ENCODE measurements at regions of chr3 and their contacts with region 1.

Region 1: GRCh38 chr3:126982471-126983175 is at the start of gene PLXNA1:
- DNase-seq: peak; percentile 78 to 94 (median 90)
- ATAC-seq: peak; percentile 91
- H3K4me3 ChIP-seq: peak within 1 kb of the TSS; percentile 57
- H3K4me3 Mint-ChIP-seq: peak within 1 kb of the TSS; percentile 83 to 92 (median 88)
- H3K27ac ChIP-seq: peak within 1 kb of the TSS; percentile 91
- H3K27ac Mint-ChIP-seq: peak within 1 kb of the TSS; percentile 79 to 96 (median 90)
- H3K4me1 ChIP-seq: peaks cover 6 to 8% of the 10 kb centered on the region in 2 donors
- H3K4me1 Mint-ChIP-seq: peaks cover 0 to 28% (median 9%) of the 10 kb centered on the region in 7 donors
- H3K27me3 ChIP-seq: no peaks in the 10 kb centered on the region
- H3K27me3 Mint-ChIP-seq: peaks cover 5 to 19% (median 11%) of the 10 kb centered on the region in 5 donors
- total RNA-seq, gene PLXNA1: 7.8 to 16.8 (median 10.7) TPM

Region 2: DNA sequence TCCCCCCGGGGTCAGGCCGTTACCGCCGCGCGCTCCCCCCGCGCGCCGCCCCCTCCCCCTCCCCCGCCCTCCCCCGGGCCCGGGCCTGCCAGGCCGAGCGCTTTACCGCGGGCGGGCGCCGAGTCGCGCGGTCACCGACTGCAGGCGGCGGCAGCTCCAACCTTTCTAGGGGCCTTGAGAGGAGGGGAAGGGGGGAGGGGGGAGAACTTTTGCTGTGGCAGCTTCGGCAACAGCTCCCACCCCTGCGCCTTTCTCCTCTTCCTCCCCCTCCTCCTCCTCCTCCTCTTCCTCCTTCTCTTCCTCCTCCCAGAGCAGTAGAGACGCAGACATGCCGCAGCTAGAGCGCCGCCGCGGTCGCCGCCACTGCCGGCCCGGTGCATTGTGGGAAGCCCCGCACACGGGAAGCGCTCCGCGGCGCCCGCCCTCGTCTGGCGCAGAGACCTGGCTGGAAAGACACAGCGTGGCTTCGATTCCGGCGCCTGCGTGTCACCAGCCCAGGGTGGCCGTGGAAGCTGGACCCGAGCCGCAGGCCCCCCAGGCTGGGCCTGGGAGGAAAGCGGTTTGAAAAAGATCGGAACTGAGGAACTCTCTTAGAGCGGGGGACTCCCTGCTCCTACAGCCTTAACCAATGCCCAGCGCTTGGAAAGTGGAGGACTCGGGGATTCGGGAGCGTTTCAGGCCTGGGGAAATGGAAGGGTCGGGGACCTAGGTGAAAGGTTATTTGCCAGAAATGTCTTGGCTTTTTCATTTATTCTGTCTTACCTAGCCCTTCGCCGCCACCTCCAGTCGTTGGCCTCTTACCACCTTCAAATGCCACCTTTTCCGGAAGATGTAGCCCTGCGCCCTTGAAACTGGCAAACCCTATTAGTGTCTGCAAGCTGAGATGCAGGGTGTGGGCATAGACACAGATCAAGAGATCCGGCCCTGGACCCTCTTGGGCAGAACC is 1607.4 kb before region 1 on chr3 and contains the start of gene ZNF148:
- CTCF ChIA-PET with region 1: no interaction called
- POLR2A ChIA-PET with region 1: no interaction called
- intact Hi-C with region 1: loop called in 1 of 2 experiments (anchors 10 kb)
- DNase-seq: peak; percentile 86 to 94 (median 92)
- ATAC-seq: peak; percentile 99
- H3K4me3 ChIP-seq: peak within 1 kb of the TSS; percentile 98
- H3K4me3 Mint-ChIP-seq: peak within 1 kb of the TSS; percentile 94 to 100 (median 96)
- H3K27ac ChIP-seq: peak within 1 kb of the TSS; percentile 88
- H3K27ac Mint-ChIP-seq: peak within 1 kb of the TSS; percentile 85 to 99 (median 97)
- H3K4me1 ChIP-seq: peaks cover 10 to 19% of the 10 kb centered on the region in 2 donors
- H3K4me1 Mint-ChIP-seq: peaks cover 27 to 59% (median 48%) of the 10 kb centered on the region in 7 donors
- H3K27me3 ChIP-seq: no peaks in the 10 kb centered on the region
- H3K27me3 Mint-ChIP-seq: peaks cover 0 to 3% (median 0%) of the 10 kb centered on the region in 5 donors
- total RNA-seq, gene ZNF148: 36.3 to 69.6 (median 53.2) TPM

Region 3: DNA sequence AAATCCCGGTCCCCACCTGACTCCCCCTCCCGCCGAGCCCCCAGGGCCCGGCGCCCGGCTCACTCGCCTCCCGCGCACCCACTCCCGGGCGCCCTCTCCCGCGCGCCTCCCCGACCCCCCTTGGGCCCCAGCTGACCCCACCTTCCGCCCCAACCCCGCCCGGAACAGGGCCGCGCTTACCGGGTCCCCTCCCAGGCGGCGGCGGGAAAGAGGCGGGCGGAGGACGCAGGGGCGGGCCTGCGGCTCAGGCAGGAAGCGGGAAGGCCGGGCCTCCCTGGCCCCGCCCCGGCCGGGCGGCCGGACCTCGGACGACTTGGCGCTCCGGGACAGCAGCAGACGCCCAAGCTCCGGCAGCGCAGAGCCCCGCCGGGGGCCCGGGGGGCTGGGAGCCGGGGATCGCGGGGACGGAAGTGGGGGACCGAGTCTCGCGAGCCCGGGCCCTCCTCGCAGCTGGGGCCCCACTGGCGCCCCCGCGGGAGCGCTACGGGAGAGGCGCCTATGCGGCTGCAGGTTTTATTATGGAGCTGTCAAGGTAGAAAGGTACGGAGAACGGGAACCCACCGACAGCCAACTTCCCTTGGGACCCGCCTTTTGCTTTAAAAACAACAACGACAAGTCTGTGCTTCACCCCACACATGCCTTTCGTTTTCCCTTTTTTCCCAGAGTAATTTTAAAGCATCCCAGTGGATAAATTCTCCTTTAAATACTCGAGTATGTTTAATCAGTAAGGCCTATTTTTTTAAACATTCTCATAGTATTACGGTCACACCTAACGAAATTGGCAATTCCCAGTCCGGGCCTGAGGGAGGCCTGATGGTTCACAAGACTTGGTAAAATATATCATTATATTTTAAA is 898.5 kb before region 1 on chr3 and contains the start of gene SLC41A3:
- CTCF ChIA-PET with region 1: no interaction called
- POLR2A ChIA-PET with region 1: no interaction called
- intact Hi-C with region 1: loop called in 1 of 2 experiments (anchors 5 kb)
- DNase-seq: peak; percentile 73 to 94 (median 84)
- ATAC-seq: peak; percentile 95
- H3K4me3 ChIP-seq: peak within 1 kb of the TSS; percentile 73
- H3K4me3 Mint-ChIP-seq: peak within 1 kb of the TSS; percentile 82 to 94 (median 91)
- H3K27ac ChIP-seq: peak within 1 kb of the TSS; percentile 91
- H3K27ac Mint-ChIP-seq: peak within 1 kb of the TSS; percentile 87 to 96 (median 91)
- H3K4me1 ChIP-seq: peaks cover 0 to 16% of the 10 kb centered on the region in 2 donors
- H3K4me1 Mint-ChIP-seq: peaks cover 11 to 27% (median 20%) of the 10 kb centered on the region in 7 donors
- H3K27me3 ChIP-seq: no peaks in the 10 kb centered on the region
- H3K27me3 Mint-ChIP-seq: peaks cover 0 to 4% (median 0%) of the 10 kb centered on the region in 5 donors
- total RNA-seq, gene SLC41A3: 24.1 to 33.6 (median 29.6) TPM

Region 4: GRCh38 chr3:126654571-126655383 is 327.8 kb before region 1 on chr3 and contains the start of gene TXNRD3:
- CTCF ChIA-PET with region 1: no interaction called
- POLR2A ChIA-PET with region 1: no interaction called
- intact Hi-C with region 1: loop called in 1 of 2 experiments (anchors 1 kb)
- DNase-seq: peak; percentile 52 to 76 (median 71)
- ATAC-seq: peak; percentile 93
- H3K4me3 ChIP-seq: peak within 1 kb of the TSS; percentile 46
- H3K4me3 Mint-ChIP-seq: peak within 1 kb of the TSS; percentile 83 to 93 (median 89)
- H3K27ac ChIP-seq: peak within 1 kb of the TSS; percentile 51
- H3K27ac Mint-ChIP-seq: peak within 1 kb of the TSS in 7 of 9 donors; percentile 18 to 91 (median 51)
- H3K4me1 ChIP-seq: peaks cover 0 to 3% of the 10 kb centered on the region in 2 donors
- H3K4me1 Mint-ChIP-seq: peaks cover 4 to 19% (median 10%) of the 10 kb centered on the region in 7 donors
- H3K27me3 ChIP-seq: peaks cover 0 to 4% of the 10 kb centered on the region in 2 donors
- H3K27me3 Mint-ChIP-seq: peaks cover 0 to 51% (median 4%) of the 10 kb centered on the region in 5 donors
- total RNA-seq, gene TXNRD3: 0.46 to 4.8 (median 3.2) TPM

Region 5: GRCh38 chr3:126752303-126752842 is 230.2 kb before region 1 on chr3:
- CTCF ChIA-PET with region 1: no interaction called
- POLR2A ChIA-PET with region 1: no interaction called
- intact Hi-C with region 1: loop called (anchors 1 kb)
- DNase-seq: peak in 7 of 9 donors; percentile 11 to 54 (median 21)
- ATAC-seq: peak; percentile 73
- H3K4me3 ChIP-seq: no peak overlapping the region
- H3K4me3 Mint-ChIP-seq: no peak overlapping the region
- H3K27ac ChIP-seq: no peak overlapping the region
- H3K27ac Mint-ChIP-seq: peak overlapping the region in 1 of 9 donors; percentile 53
- H3K4me1 ChIP-seq: no peaks in the 10 kb centered on the region
- H3K4me1 Mint-ChIP-seq: peaks cover 0 to 12% (median 10%) of the 10 kb centered on the region in 7 donors
- H3K27me3 ChIP-seq: no peaks in the 10 kb centered on the region
- H3K27me3 Mint-ChIP-seq: no peaks in the 10 kb centered on the region

Region 6: DNA sequence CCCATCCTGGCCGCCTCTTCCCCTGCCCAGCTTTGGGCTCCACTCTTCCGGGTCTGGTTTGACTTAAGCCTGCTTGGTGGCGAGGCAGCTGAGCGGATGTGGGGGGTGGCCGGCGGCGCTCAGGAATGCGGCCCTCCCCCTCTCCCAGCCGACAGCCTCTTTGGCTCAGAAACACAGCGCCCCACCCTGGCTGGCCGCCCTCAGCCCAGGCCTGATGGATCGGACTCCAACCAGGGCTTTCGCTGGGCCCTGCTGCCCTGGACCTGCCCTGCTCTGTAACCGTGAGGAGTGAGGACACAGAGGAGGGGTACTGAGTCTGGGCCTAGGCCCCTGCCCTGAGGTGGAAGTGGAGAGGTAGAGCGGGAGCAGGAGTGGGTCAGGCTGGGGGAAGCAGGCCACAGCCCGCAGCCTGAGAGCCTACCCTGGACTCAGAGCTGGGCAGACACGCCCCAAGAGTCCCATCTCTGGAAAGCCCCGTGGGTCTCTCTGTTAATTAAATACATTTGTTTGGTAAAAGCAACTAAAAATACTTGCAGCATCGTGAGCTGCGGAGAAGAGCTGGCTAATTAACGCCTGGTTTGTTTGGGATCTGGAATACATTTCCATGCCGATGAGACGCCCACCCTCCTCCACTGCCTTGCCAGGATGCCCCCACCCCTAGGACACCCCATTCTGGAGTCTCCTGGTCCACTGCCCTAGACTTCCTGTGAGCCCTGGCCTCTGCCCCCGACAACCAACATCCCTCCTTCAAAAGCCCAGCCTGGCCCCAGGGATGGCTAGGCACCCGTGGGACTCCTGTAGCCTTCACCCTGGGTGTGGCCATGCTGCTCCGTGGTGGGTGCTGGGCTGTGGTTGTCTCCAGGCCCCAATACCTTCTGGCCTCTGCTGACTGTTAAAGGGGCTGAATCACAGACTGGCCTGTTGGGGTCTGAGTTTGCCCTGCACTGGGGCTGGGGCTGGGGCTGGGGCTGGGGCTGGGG is 19.9 kb after region 1 on chr3:
- CTCF ChIA-PET with region 1: no interaction called
- POLR2A ChIA-PET with region 1: no interaction called
- intact Hi-C with region 1: no loop called
- DNase-seq: no peak
- ATAC-seq: no peak
- H3K4me3 ChIP-seq: no peak overlapping the region
- H3K4me3 Mint-ChIP-seq: no peak overlapping the region
- H3K27ac ChIP-seq: no peak overlapping the region
- H3K27ac Mint-ChIP-seq: no peak overlapping the region
- H3K4me1 ChIP-seq: no peaks in the 10 kb centered on the region
- H3K4me1 Mint-ChIP-seq: peaks cover 0 to 2% (median 0%) of the 10 kb centered on the region in 7 donors
- H3K27me3 ChIP-seq: no peaks in the 10 kb centered on the region
- H3K27me3 Mint-ChIP-seq: no peaks in the 10 kb centered on the region

Region 7: DNA sequence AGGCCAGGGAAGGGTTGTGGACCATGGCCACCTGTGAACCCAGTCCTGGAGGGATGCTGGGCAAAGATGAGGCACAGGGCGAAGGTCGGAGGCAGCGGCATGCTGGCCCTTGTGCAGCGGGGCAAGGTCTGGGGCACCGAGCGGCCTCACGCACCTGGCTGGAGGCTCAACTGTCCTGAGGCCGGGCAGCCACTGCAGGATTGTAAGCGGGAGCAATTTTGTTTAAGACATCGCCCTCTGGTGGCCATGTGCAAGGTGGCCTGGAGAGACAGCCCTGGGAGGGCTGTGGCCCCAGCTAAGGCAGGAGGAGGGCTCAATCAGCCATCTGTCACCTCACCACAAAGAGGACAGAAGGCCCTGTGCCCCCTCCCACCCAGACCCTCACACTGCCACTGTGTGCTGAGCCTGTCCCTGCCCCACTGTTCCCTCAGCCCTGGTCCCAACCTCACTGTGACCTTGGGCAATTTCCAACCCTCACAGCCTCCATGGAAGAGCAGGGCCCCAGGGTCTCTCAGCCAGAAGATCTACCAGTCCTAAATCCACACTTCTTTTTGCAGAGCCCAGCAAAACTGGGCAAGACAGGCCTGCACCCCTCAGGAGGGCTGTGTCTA is 561.7 kb after region 1 on chr3:
- CTCF ChIA-PET with region 1: interaction called, 3 read pairs
- POLR2A ChIA-PET with region 1: no interaction called
- intact Hi-C with region 1: loop called (anchors 1 to 2 kb)
- DNase-seq: peak; percentile 16 to 59 (median 43)
- ATAC-seq: peak; percentile 69
- H3K4me3 ChIP-seq: no peak overlapping the region
- H3K4me3 Mint-ChIP-seq: no peak overlapping the region
- H3K27ac ChIP-seq: no peak overlapping the region
- H3K27ac Mint-ChIP-seq: no peak overlapping the region
- H3K4me1 ChIP-seq: peaks cover 0 to 4% of the 10 kb centered on the region in 2 donors
- H3K4me1 Mint-ChIP-seq: peaks cover 4 to 13% (median 12%) of the 10 kb centered on the region in 7 donors
- H3K27me3 ChIP-seq: no peaks in the 10 kb centered on the region
- H3K27me3 Mint-ChIP-seq: peaks cover 0 to 14% (median 0%) of the 10 kb centered on the region in 5 donors

Region 8: DNA sequence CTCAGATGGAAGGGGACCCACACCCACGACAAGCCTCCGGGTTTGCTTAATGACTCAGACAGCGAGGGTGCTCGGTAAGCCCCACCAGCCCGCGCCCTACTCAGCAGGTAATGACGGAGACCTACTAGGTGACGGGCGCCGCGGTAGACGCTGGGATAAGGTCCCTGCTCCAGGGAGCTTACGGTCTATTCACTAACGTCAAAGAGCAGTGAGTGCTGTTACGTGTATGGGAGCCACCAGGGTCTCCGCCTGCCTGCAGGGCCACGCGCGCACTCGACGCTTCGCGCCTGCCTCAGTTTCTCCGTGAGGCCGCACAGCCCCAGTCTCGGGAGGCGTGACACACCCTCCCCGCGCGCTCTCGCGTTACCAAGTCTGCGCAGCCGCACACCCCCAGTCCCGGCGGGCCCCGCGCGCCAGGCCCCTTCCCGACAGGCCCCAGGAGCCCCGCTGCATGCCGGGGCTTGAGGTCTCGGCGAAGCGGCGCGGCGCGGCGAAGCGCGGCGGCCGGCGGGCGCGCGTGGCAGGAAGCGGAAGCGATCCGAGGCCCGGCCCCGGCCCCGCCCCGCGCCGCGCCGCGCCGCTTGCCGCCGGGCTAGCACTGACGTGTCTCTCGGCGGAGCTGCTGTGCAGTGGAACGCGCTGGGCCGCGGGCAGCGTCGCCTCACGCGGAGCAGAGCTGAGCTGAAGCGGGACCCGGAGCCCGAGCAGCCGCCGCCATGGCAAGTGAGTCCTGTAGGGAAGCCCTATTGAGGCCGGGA is 1069.4 kb after region 1 on chr3 and contains the start of gene SEC61A1:
- CTCF ChIA-PET with region 1: no interaction called
- POLR2A ChIA-PET with region 1: no interaction called
- intact Hi-C with region 1: loop called in 1 of 2 experiments (anchors 1 kb)
- DNase-seq: peak; percentile 94 to 97 (median 95)
- ATAC-seq: peak; percentile 97
- H3K4me3 ChIP-seq: peak within 1 kb of the TSS; percentile 82
- H3K4me3 Mint-ChIP-seq: peak within 1 kb of the TSS; percentile 90 to 98 (median 96)
- H3K27ac ChIP-seq: peak within 1 kb of the TSS; percentile 95
- H3K27ac Mint-ChIP-seq: peak within 1 kb of the TSS; percentile 87 to 99 (median 97)
- H3K4me1 ChIP-seq: peaks cover 28 to 37% of the 10 kb centered on the region in 2 donors
- H3K4me1 Mint-ChIP-seq: peaks cover 36 to 44% (median 43%) of the 10 kb centered on the region in 7 donors
- H3K27me3 ChIP-seq: no peaks in the 10 kb centered on the region
- H3K27me3 Mint-ChIP-seq: peaks cover 0 to 17% (median 1%) of the 10 kb centered on the region in 5 donors
- total RNA-seq, gene SEC61A1: 110 to 219 (median 132) TPM

Measured in naive thymus-derived CD4-positive, alpha-beta T cell (primary cell).